PC-9 (cell line): ENCODE measurements at regions of chr11 and their contacts with region 1.

Region 1: GRCh38 chr11:75142714-75143419 is 8.0 kb upstream of the SLCO2B1 start:
- DNase-seq: peak in 1 of 2 experiments; percentile 53
- H3K4me3 ChIP-seq: no peak overlapping the region
- H3K27ac ChIP-seq: no peak overlapping the region
- H3K4me1 ChIP-seq: no peaks in the 10 kb centered on the region
- H3K27me3 ChIP-seq: peaks cover 42% of the 10 kb centered on the region
- CTCF ChIP-seq: no peak

Region 2: GRCh38 chr11:74838188-74838587 is 304.7 kb before region 1 on chr11:
- CTCF ChIA-PET with region 1: no interaction called
- POLR2A ChIA-PET with region 1: no interaction called
- intact Hi-C with region 1: no loop called
- DNase-seq: no peak
- H3K4me3 ChIP-seq: no peak overlapping the region
- H3K27ac ChIP-seq: no peak overlapping the region
- H3K4me1 ChIP-seq: no peaks in the 10 kb centered on the region
- H3K27me3 ChIP-seq: no peaks in the 10 kb centered on the region
- CTCF ChIP-seq: no peak

Region 3: GRCh38 chr11:74992852-74993251 is 150.0 kb before region 1 on chr11:
- CTCF ChIA-PET with region 1: no interaction called
- POLR2A ChIA-PET with region 1: no interaction called
- intact Hi-C with region 1: no loop called
- DNase-seq: no peak
- H3K4me3 ChIP-seq: no peak overlapping the region
- H3K27ac ChIP-seq: no peak overlapping the region
- H3K4me1 ChIP-seq: peaks cover 9% of the 10 kb centered on the region
- H3K27me3 ChIP-seq: no peaks in the 10 kb centered on the region
- CTCF ChIP-seq: no peak

Region 4: DNA sequence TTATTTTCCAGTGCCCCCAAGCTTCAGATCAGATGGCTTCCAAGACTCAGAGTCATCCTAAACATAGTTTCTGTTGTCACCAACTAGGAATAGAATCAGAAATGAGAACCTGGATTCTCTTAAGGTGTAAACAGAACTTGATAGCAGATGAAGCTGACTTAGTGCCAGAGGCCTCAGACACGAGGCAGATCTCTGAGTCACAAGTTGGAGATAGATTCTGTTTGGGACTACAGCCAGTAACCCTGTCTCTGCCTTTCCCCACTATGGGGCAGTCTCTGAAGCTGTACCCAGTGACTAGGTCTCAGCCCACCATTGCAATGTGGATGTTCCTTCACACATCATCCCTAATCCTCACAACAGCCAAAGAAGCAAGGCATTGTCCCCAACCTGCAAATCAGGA is 128.7 kb before region 1 on chr11:
- CTCF ChIA-PET with region 1: interaction called, 11 read pairs
- POLR2A ChIA-PET with region 1: no interaction called
- intact Hi-C with region 1: no loop called
- DNase-seq: peak in 1 of 2 experiments; percentile 19
- H3K4me3 ChIP-seq: no peak overlapping the region
- H3K27ac ChIP-seq: no peak overlapping the region
- H3K4me1 ChIP-seq: no peaks in the 10 kb centered on the region
- H3K27me3 ChIP-seq: no peaks in the 10 kb centered on the region
- CTCF ChIP-seq: no peak

Region 5: DNA sequence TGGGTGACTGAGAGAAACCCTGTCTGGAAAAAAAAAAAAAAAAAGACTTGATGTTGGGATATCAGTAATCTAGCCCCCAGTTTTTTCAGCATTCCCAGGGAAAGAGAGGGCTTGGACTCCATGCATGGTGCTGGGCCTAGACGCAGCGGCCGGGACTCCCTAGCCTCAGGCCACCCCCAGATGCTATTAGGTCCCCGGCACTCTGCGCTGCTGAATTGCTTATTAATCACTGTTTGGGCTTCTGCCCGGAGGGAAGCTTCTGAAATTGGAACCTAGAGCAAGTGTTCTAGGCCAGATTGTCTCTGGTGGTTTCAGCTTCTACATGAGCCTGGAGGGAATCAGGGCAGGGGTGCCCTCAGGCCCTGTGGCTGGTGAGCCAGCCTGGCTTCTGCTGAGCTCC is 47.1 kb after region 1 on chr11:
- CTCF ChIA-PET with region 1: no interaction called
- POLR2A ChIA-PET with region 1: interaction called, 18 read pairs
- intact Hi-C with region 1: no loop called
- DNase-seq: no peak
- H3K4me3 ChIP-seq: no peak overlapping the region
- H3K27ac ChIP-seq: no peak overlapping the region
- H3K4me1 ChIP-seq: no peaks in the 10 kb centered on the region
- H3K27me3 ChIP-seq: peaks cover 85% of the 10 kb centered on the region
- CTCF ChIP-seq: no peak

Region 6: GRCh38 chr11:75248690-75249268 is 105.9 kb after region 1 on chr11:
- CTCF ChIA-PET with region 1: interaction called, 10 read pairs
- POLR2A ChIA-PET with region 1: interaction called, 4 read pairs
- intact Hi-C with region 1: loop called (anchors 1 kb)
- DNase-seq: peak; percentile 79 to 84
- H3K4me3 ChIP-seq: no peak overlapping the region
- H3K27ac ChIP-seq: no peak overlapping the region
- H3K4me1 ChIP-seq: no peaks in the 10 kb centered on the region
- H3K27me3 ChIP-seq: peaks cover 50% of the 10 kb centered on the region
- CTCF ChIP-seq: peak; percentile 99